GM10248 (cell line): ENCODE measurements at regions of chr9 and their contacts with region 1.

Region 1: DNA sequence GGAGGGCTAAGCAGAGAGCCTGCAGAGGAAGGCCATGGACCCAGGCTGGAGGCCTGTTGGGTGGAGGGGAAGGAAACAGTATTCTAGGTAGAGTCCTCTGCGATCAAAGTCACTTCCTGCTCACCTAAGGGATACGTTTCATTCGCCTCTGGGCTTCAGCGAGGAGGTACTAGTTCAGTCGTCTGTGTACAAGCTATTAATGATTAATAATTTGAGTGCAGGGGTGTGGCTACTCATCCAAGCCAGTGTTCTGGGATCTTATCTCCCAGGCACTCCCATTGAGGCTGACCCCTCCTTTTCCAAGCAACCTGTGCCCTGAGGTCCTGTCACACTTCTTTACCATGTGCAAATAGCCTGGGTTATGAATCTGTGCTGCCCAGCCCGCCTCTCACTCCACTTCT is 25.2 kb downstream of the RALGPS1 start:
- DNase-seq: no peak
- CTCF ChIP-seq: no peak

Region 2: DNA sequence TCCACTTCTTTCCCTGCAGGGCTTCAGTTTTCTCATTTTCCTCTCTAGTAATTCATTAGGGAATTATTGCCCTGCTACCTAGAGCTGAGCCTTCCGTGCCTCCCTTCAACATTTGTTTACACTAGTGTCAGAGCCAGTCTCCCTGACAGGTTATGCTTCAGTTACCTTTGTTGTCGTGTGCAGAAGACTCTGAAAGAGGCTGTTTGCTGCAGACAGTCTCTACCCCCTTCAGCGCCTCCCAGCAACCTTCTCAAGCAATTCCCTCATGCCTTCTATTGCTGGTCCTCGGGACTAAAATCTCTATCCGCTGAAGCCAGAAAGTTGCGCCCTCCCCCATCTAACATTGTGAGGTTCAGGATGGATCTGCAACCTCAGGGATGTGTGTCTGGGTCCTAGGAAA is 12.4 kb before region 1 on chr9:
- CTCF ChIA-PET with region 1: interaction called, 23 read pairs
- POLR2A ChIA-PET with region 1: no interaction called
- DNase-seq: no peak
- CTCF ChIP-seq: no peak

Region 3: DNA sequence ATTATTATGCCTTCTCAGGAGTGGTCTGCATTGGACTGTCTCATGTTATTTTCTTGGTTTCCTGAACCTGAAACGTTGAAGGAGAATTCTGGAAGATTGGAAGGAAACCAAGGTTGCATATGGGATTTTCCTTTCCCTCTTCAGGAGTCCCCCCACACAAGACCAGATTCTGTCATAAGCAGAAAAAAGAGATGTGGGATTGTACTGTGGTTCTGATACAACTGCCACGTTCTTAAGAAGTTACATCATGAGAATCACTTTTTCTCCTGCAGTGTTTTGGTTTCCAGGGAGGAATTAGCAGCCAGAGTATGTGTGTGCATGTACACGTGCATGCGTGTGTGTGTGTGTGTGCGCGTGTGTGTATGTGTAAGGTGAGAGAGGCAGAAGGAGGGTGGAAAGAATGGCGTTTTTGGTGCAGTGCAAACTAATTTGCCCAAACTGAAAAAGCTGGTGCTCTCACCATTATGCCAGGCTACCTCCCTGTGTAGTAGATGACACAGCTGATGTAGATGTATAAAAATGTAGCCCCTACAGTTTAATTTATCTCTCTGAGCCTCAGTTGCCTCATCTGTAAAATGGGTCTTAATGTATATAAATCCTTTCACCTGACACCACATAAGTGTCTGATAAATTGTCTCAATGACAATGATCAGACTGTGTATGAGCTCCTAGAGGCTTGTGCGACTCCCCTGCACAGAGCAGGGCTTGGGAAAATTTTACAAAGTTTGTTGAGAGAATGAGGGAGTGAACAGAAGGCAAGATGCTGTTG is 13.4 kb after region 1 on chr9:
- CTCF ChIA-PET with region 1: interaction called, 18 read pairs
- POLR2A ChIA-PET with region 1: no interaction called
- DNase-seq: no peak
- CTCF ChIP-seq: no peak

Region 4: GRCh38 chr9:127214421-127215267 is 274.8 kb after region 1 on chr9:
- CTCF ChIA-PET with region 1: interaction called, 13 read pairs
- POLR2A ChIA-PET with region 1: no interaction called
- DNase-seq: peak; percentile 82
- CTCF ChIP-seq: peak; percentile 74